Heart right ventricle (tissue), 16 donors: ENCODE measurements at regions of chr5 and their contacts with region 1.

Region 1: GRCh38 chr5:133111299-133111698 is 59.5 kb downstream of the HSPA4 start:
- DNase-seq: peak; percentile 79 to 85
- ATAC-seq: peak; percentile 48 to 84 (median 79)
- H3K4me3 ChIP-seq: no peak overlapping the region
- H3K27ac ChIP-seq: no peak overlapping the region
- H3K4me1 ChIP-seq: peaks cover 0 to 9% (median 0%) of the 10 kb centered on the region in 9 donors
- H3K27me3 ChIP-seq: peaks cover 0 to 11% (median 0%) of the 10 kb centered on the region in 7 donors
- CTCF ChIP-seq: peak; percentile 73 to 97 (median 90)

Region 2: GRCh38 chr5:132736853-132737833 is 374.2 kb before region 1 on chr5 and contains the start of gene KIF3A:
- intact Hi-C with region 1: no loop called
- DNase-seq: peak; percentile 95 to 99
- ATAC-seq: peak; percentile 99 to 100 (median 100)
- H3K4me3 ChIP-seq: peak within 1 kb of the TSS; percentile 63 to 99 (median 84)
- H3K27ac ChIP-seq: peak within 1 kb of the TSS in 9 of 10 donors; percentile 50 to 82 (median 72)
- H3K4me1 ChIP-seq: peaks cover 0 to 21% (median 17%) of the 10 kb centered on the region in 9 donors
- H3K27me3 ChIP-seq: peaks cover 0 to 11% (median 0%) of the 10 kb centered on the region in 7 donors
- CTCF ChIP-seq: peak in 2 of 9 donors; percentile 26 to 35
- total RNA-seq, gene KIF3A: 10.1 to 18.6 (median 13.1) TPM

Region 3: DNA sequence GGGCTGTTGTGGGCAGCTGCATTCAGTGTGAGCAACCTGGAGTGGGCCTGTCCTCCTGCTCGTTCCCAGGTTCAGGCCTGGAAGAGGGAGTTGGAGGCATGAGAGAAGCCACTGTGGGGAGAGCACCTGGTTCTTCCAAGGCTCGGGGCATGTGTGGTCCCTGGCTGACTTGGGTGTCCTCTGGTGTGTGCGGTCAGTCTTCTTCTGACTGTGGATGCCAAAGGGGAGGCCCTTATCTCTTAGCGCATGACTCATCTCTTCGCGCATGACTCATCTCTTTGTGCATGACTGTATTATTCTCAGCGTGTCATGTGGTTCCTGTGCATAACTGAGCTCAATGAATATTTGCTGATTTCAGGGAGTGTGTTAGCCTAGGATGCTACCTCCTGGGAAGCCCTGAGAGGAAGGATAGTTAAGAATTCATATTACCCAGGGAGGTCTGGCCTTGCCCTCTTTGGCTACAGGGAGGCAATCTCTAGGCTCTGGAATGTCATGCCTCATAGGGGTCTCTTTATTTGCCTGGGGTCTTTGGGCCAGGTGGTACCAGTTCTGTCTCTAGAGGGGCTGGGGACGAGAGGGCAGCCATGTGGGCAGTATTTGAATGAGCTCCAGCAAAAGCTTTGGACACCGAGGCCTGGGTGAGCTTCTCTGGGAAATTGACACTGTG is 129.3 kb after region 1 on chr5:
- intact Hi-C with region 1: loop called in 6 of 10 experiments (anchors 5 to 10 kb)
- DNase-seq: peak in 1 of 2 donors; percentile 14
- ATAC-seq: peak in 7 of 8 donors; percentile 36 to 87 (median 79)
- H3K4me3 ChIP-seq: no peak overlapping the region
- H3K27ac ChIP-seq: peak overlapping the region in 1 of 10 donors; percentile 15
- H3K4me1 ChIP-seq: peaks cover 0 to 27% (median 7%) of the 10 kb centered on the region in 9 donors
- H3K27me3 ChIP-seq: peaks cover 0 to 7% (median 0%) of the 10 kb centered on the region in 7 donors
- CTCF ChIP-seq: no peak

Region 4: GRCh38 chr5:133287500-133287899 is 176.2 kb after region 1 on chr5:
- intact Hi-C with region 1: loop called in 6 of 10 experiments (anchors 2 to 5 kb)
- DNase-seq: peak in 1 of 2 donors; percentile 29
- ATAC-seq: peak in 1 of 8 donors; percentile 24
- H3K4me3 ChIP-seq: no peak overlapping the region
- H3K27ac ChIP-seq: no peak overlapping the region
- H3K4me1 ChIP-seq: peaks cover 0 to 8% (median 0%) of the 10 kb centered on the region in 9 donors
- H3K27me3 ChIP-seq: no peaks in the 10 kb centered on the region
- CTCF ChIP-seq: peak in 7 of 9 donors; percentile 21 to 54 (median 41)

Region 5: GRCh38 chr5:133610489-133611356 is 499.4 kb after region 1 on chr5:
- intact Hi-C with region 1: loop called in 2 of 10 experiments (anchors 10 kb)
- DNase-seq: peak; percentile 45 to 64
- ATAC-seq: peak; percentile 93 to 97 (median 96)
- H3K4me3 ChIP-seq: peak overlapping the region in 9 of 10 donors; percentile 22 to 45 (median 38)
- H3K27ac ChIP-seq: no peak overlapping the region
- H3K4me1 ChIP-seq: peaks cover 8 to 35% (median 15%) of the 10 kb centered on the region in 9 donors
- H3K27me3 ChIP-seq: peaks cover 15 to 84% (median 76%) of the 10 kb centered on the region in 7 donors
- CTCF ChIP-seq: peak; percentile 33 to 73 (median 56)

Region 6: GRCh38 chr5:133944263-133945185 is 833.2 kb after region 1 on chr5:
- intact Hi-C with region 1: loop called in 1 of 10 experiments (anchors 10 kb)
- DNase-seq: peak in 1 of 2 donors; percentile 34
- ATAC-seq: peak in 6 of 8 donors; percentile 30 to 69 (median 64)
- H3K4me3 ChIP-seq: no peak overlapping the region
- H3K27ac ChIP-seq: no peak overlapping the region
- H3K4me1 ChIP-seq: peaks cover 0 to 9% (median 0%) of the 10 kb centered on the region in 9 donors
- H3K27me3 ChIP-seq: no peaks in the 10 kb centered on the region
- CTCF ChIP-seq: peak; percentile 27 to 68 (median 59)